Activated CD4-positive, alpha-beta T cell treated with anti-CD3 and anti-CD28 coated beads, Interleukin-2, amount 10 ng/mL, durations not matched to agents 24 days and 14 days (primary cell): ENCODE measurements at regions of chrX and their contacts with region 1.

Region 1: DNA sequence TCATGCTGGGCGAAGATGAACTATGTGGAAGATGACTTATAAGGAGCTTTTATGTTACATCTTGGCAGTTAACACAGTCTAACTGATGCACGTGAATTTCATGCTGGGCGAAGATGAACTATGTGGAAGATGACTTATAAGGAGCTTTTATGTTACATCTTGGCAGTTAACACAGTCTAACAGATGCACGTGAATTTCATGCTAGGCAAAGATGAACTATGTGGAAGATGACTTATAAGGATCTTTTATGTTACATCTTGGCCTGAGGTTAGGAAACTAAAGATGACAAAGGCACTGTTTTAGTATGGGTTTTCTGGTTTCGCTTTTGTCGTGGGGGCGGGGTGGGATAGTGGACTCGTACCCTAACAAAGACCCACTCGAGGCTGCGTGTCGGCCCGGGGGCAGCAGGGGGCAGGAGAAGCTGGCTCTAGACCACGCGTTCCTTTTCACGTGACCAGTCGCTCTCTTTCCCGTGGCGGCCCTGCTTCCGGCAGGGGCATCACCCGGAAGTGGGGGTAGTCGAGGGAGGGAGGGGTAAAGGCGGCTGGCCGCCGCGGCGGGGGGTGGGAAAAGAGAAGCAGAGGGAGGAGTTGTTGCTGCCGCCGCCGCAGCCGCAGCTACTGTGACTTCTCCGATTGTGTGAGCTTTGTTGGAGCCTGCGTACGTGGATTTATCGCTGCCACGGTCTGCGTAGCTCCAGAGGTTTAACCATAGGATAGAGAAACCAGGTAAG is at the start of gene ATP7A:
- DNase-seq: peak; percentile 96
- H3K4me3 Mint-ChIP-seq: peak within 1 kb of the TSS; percentile 96
- H3K27ac Mint-ChIP-seq: peak within 1 kb of the TSS; percentile 99
- H3K4me1 Mint-ChIP-seq: peaks cover 10% of the 10 kb centered on the region
- H3K27me3 Mint-ChIP-seq: no peaks in the 10 kb centered on the region
- total RNA-seq, gene ATP7A: 7.6 and 8.1 TPM in 2 replicates

Region 2: DNA sequence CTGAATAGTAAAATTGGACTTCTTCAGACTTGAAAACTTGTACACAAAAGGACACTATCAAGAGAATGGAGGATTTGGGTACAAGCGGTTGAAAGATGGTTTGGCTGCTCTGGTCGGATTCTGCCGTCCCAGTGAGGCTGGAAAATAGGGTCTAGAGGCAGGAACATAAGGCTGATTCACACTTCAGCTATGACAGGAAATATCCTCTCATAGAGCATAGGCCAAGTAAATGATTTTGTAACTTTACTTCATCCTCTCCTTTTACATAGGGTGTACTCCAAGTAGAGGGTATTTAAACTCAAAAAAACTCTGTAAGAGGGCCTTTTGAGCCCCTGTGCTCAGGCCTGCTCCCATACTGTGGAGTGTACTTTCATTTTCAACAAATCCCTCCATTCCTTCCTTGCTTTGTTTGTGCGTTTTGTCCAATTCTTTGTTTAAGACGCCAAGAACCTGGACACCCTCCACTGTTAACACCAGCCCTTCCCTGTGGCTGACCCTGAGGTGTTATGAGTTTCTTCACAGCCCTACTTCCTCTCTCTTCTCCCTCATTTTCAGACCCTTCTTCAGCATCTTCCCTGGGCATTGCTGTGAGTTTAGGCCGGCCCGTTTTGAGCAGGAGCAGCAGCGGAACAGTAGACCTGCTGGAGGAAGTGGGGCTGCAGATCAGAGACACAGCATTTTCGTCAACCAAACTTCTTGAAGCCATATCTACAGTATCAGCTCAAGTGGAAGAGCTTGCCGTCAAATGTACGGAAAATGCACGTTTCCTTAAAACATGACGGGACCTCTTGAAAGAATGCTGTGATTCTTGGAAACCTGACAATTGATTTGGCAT is 52.0 kb after region 1 on chrX:
- intact Hi-C with region 1: loop called (anchors 1 kb)
- DNase-seq: peak; percentile 69
- H3K4me3 Mint-ChIP-seq: peak overlapping the region; percentile 88
- H3K27ac Mint-ChIP-seq: peak overlapping the region; percentile 98
- H3K4me1 Mint-ChIP-seq: peaks cover 27% of the 10 kb centered on the region
- H3K27me3 Mint-ChIP-seq: no peaks in the 10 kb centered on the region

Region 3: DNA sequence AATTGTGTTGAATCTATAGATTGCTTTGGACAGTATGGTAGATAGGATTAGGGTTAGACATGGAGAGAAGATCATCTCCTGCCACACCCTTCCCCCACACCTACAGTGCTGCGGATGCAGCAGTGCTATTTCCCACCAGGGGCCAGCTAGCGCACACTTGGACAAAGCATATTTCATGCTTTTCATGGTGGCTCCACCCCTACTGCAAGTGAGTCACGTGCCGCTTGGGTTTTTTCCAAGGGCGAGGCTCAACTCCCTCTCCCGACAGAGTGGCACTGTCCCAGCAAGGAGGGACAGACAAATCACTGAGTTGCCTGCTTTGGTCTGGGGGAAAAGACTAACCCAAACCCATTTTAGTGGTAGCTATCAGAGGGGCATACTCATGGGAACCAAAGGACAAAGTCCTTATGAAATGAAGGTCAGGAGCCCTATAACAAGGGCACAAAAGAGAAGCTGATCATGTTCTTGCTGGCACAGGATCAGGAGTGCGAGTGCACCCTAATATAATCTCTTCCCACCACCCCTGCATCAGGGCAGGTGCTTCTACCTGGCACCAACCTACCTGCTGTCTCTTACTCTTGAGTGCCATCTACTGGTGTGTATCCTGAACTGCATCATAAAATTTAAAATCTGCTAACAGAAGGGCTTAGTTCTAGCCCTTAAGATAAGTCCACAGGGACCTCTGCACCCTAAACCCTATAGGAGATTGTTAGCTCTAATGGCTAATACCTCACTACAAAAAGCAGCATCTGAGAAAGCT is 114.3 kb after region 1 on chrX:
- intact Hi-C with region 1: loop called (anchors 1 kb)
- DNase-seq: peak; percentile 71
- H3K4me3 Mint-ChIP-seq: no peak overlapping the region
- H3K27ac Mint-ChIP-seq: no peak overlapping the region
- H3K4me1 Mint-ChIP-seq: peaks cover 3% of the 10 kb centered on the region
- H3K27me3 Mint-ChIP-seq: no peaks in the 10 kb centered on the region

Region 4: DNA sequence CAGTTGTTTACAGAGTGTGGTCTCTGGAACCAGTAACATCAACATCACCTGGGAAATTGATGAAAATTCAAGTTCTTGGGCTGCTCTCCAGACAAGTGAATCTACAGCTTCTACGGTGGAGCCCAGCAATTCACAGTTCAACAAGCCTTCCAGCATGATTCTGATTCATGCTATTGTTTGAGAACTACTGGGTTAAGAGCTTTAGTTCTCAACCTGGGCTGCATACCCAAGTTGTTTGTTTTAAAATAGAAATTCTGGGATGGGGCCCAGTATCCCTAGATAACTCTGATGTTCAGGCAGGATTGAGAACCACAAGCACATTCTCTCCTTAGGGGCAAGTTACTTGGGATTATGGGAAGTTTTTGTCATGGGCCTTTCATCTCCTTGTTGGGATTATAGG is 155.8 kb after region 1 on chrX:
- intact Hi-C with region 1: loop called (anchors 1 kb)
- DNase-seq: no peak
- H3K4me3 Mint-ChIP-seq: no peak overlapping the region
- H3K27ac Mint-ChIP-seq: no peak overlapping the region
- H3K4me1 Mint-ChIP-seq: peaks cover 13% of the 10 kb centered on the region
- H3K27me3 Mint-ChIP-seq: no peaks in the 10 kb centered on the region

Region 5: DNA sequence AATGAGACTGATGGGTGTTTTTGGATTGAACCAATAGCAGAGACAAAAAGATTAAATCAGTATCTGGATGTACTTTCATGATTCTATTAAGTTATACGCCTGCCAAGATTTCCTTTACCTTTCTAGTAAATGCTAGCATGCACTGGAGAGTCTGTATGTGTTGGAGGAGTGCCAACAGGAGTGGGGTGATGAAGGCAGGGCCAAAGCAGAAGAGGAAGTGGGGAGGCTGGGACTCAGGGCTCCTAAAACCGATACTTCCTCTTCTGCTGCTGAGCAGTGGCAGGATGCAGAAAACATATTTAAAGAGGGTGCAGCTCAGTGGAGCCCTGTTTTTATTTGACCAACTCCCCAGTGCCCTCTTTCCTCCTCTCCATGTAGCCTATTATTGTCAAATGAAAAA is 411.5 kb after region 1 on chrX:
- intact Hi-C with region 1: loop called (anchors 10 kb)
- DNase-seq: peak; percentile 83
- H3K4me3 Mint-ChIP-seq: peak overlapping the region; percentile 86
- H3K27ac Mint-ChIP-seq: peak overlapping the region; percentile 96
- H3K4me1 Mint-ChIP-seq: peaks cover 34% of the 10 kb centered on the region
- H3K27me3 Mint-ChIP-seq: no peaks in the 10 kb centered on the region